B cell (primary cell): ENCODE measurements at regions of chr7 and their contacts with region 1.

Region 1: GRCh38 chr7:107462740-107463444 is 7.0 kb upstream of the GPR22 start:
- DNase-seq: peak; percentile 67
- ATAC-seq: peak; percentile 72
- H3K4me3 ChIP-seq: no peak overlapping the region
- H3K4me3 Mint-ChIP-seq: no peak overlapping the region
- H3K27ac ChIP-seq: no peak overlapping the region
- H3K27ac Mint-ChIP-seq: no peak overlapping the region
- H3K4me1 ChIP-seq: no peaks in the 10 kb centered on the region
- H3K4me1 Mint-ChIP-seq: no peaks in the 10 kb centered on the region
- H3K27me3 ChIP-seq: no peaks in the 10 kb centered on the region
- H3K27me3 Mint-ChIP-seq: no peaks in the 10 kb centered on the region
- CTCF ChIP-seq: peak; percentile 79

Region 2: GRCh38 chr7:107446531-107446930 is 16.4 kb before region 1 on chr7:
- CTCF ChIA-PET with region 1: interaction called, 11 read pairs
- POLR2A ChIA-PET with region 1: no interaction called
- intact Hi-C with region 1: no loop called
- DNase-seq: no peak
- ATAC-seq: no peak
- H3K4me3 ChIP-seq: no peak overlapping the region
- H3K4me3 Mint-ChIP-seq: no peak overlapping the region
- H3K27ac ChIP-seq: no peak overlapping the region
- H3K27ac Mint-ChIP-seq: no peak overlapping the region
- H3K4me1 ChIP-seq: no peaks in the 10 kb centered on the region
- H3K4me1 Mint-ChIP-seq: peaks cover 8% of the 10 kb centered on the region
- H3K27me3 ChIP-seq: no peaks in the 10 kb centered on the region
- H3K27me3 Mint-ChIP-seq: no peaks in the 10 kb centered on the region
- CTCF ChIP-seq: no peak

Region 3: GRCh38 chr7:107622429-107622828 is 159.5 kb after region 1 on chr7:
- CTCF ChIA-PET with region 1: no interaction called
- POLR2A ChIA-PET with region 1: no interaction called
- intact Hi-C with region 1: no loop called
- DNase-seq: no peak
- ATAC-seq: no peak
- H3K4me3 ChIP-seq: no peak overlapping the region
- H3K4me3 Mint-ChIP-seq: no peak overlapping the region
- H3K27ac ChIP-seq: peak overlapping the region in 1 of 2 donors; percentile 14
- H3K27ac Mint-ChIP-seq: no peak overlapping the region
- H3K4me1 ChIP-seq: peaks cover 5 to 6% of the 10 kb centered on the region in 2 donors
- H3K4me1 Mint-ChIP-seq: no peaks in the 10 kb centered on the region
- H3K27me3 ChIP-seq: no peaks in the 10 kb centered on the region
- H3K27me3 Mint-ChIP-seq: no peaks in the 10 kb centered on the region
- CTCF ChIP-seq: no peak

Region 4: GRCh38 chr7:107718456-107719193 is 255.7 kb after region 1 on chr7:
- CTCF ChIA-PET with region 1: interaction called, 133 read pairs
- POLR2A ChIA-PET with region 1: no interaction called
- intact Hi-C with region 1: no loop called
- DNase-seq: no peak
- ATAC-seq: no peak
- H3K4me3 ChIP-seq: no peak overlapping the region
- H3K4me3 Mint-ChIP-seq: no peak overlapping the region
- H3K27ac ChIP-seq: no peak overlapping the region
- H3K27ac Mint-ChIP-seq: no peak overlapping the region
- H3K4me1 ChIP-seq: no peaks in the 10 kb centered on the region
- H3K4me1 Mint-ChIP-seq: no peaks in the 10 kb centered on the region
- H3K27me3 ChIP-seq: no peaks in the 10 kb centered on the region
- H3K27me3 Mint-ChIP-seq: peaks cover 9% of the 10 kb centered on the region
- CTCF ChIP-seq: no peak

Region 5: DNA sequence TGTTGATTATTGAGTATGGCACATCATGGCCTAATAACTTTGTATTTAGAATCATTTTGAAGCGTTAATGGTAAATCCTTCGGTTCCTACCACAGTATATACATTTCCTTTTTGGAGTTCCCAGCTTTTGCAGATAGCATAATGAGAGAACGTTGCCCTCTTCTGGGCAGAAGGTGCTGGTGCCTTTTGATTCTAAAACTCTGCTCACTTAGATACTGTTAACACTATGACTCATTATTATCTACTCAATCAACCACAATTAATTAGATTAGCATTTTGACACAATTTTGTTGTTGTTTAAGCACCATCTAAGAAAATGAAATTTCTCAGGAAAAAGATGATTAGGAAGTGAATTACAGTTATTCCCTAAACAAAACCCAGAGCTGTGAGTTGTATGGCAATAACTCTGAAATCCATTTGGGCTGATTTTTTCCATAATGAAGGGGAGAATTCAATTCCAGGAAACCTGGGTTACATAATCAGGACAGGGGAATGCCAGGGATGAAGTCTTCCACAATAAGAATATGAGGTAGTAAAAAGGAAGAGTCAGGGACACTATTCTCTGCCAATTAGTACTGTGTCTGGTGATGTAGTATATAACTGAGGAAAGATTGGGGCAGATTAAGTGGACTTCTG is 416.6 kb after region 1 on chr7:
- CTCF ChIA-PET with region 1: interaction called, 75 read pairs
- POLR2A ChIA-PET with region 1: no interaction called
- intact Hi-C with region 1: loop called (anchors 1 kb)
- DNase-seq: peak; percentile 52
- ATAC-seq: peak; percentile 58
- H3K4me3 ChIP-seq: no peak overlapping the region
- H3K4me3 Mint-ChIP-seq: no peak overlapping the region
- H3K27ac ChIP-seq: no peak overlapping the region
- H3K27ac Mint-ChIP-seq: no peak overlapping the region
- H3K4me1 ChIP-seq: no peaks in the 10 kb centered on the region
- H3K4me1 Mint-ChIP-seq: peaks cover 3% of the 10 kb centered on the region
- H3K27me3 ChIP-seq: peaks cover 0 to 14% (median 3%) of the 10 kb centered on the region in 4 experiments
- H3K27me3 Mint-ChIP-seq: peaks cover 42% of the 10 kb centered on the region
- CTCF ChIP-seq: peak; percentile 87